ENCODE measurements at regions of chr5 and their contacts with region 1.

Region 1: GRCh38 chr5:32355686-32356085 is 42.9 kb upstream of the MTMR12 start:
- DNase-seq: no peak
- ATAC-seq: no peak
- H3K4me3 Mint-ChIP-seq: no peak overlapping the region
- H3K27ac Mint-ChIP-seq: peak overlapping the region; percentile 10; the same call in 1 of the 2 replicates
- H3K4me1 Mint-ChIP-seq: peaks cover 19% of the 10 kb centered on the region
- H3K27me3 Mint-ChIP-seq: no peaks in the 10 kb centered on the region
- CTCF ChIP-seq: no peak

Region 2: DNA sequence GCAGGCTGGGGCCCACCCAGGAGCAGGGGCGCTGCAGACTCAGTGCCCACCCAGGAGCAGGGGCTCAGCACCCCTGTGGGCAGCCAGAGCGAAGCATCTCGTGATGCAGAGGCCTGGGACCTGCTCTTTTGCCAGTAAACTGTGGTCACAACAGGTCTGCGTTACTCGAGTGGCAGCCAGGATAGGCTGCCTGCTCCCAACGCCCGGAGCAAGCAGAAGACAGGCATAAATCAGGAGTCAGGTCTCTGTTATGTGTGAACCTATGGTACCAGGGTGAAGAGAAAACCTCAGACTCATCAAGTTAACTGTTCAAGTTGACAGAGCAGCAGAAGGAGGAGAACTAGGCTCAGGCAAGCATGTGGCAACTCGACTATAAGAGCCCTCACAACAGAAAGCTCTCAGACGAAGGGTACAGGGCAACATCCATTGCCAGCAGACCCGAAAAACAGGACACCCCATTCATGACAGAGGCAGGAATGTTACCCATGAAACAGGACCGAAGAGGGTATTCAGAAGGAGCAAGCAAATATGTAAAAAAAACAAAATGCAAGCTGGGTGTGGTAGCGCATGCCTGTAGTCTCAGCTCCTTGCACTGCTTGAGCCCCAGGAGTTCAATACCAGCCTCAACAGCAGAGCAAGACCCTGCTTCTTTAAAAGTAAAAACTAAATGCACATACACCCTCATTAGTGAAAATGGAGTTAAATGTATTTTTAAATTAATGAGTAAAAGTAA is 253.3 kb before region 1 on chr5:
- CTCF ChIA-PET with region 1: no interaction called
- POLR2A ChIA-PET with region 1: interaction called, 11 read pairs
- DNase-seq: no peak
- ATAC-seq: no peak
- H3K4me3 Mint-ChIP-seq: no peak overlapping the region
- H3K27ac Mint-ChIP-seq: no peak overlapping the region
- H3K4me1 Mint-ChIP-seq: no peaks in the 10 kb centered on the region
- H3K27me3 Mint-ChIP-seq: no peaks in the 10 kb centered on the region
- CTCF ChIP-seq: no peak

Measured in WTC11 (cell line).